K562 (cell line): ENCODE measurements at regions of chr11 and their contacts with region 1.

Region 1: DNA sequence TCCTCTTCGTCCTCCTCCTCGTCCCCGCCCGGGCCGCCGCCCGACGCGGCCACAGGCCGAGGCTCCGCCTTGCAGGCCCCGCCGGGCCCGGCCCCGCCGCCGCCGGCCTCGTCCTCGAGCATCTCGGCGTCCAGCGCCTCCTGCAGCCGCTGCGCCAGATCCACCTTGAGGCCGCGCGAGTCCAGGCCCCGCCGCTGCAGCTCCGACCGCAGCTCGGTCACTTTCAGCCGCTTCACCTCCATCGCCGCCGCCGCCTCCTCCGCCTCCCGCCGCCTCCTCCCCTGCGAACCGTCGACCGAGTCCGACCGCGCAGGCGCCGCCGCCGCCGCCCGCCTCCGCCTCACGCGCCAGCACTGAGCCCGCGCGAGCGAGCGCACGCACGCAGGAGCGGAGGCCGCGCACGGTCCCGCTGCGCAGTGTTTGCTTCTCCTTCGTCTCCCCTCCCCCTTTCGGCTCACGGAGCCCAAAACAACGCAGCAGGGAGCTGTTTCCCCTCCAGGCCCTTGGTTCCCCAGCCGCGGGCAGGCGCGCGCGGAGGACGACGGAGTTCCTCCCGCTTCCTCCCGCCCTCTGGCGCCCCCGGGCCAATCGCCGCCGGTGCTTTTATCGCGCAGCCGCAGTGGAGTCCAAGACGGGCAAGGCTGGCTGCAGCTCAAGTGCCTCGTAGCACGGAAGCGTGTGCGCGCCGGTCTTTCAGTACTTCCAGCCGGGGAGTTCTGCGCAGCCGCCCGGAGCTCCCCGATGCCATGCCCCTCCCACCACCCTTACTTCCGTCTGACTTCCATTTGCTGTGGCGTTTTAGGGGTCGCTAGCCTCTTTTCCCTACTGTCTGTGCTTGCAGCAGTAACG is at the start of gene HNRNPUL2:
- DNase-seq: peak; percentile 94 to 99 (median 96)
- ATAC-seq: peak; percentile 90
- H3K4me3 ChIP-seq: peak within 1 kb of the TSS; percentile 90
- H3K27ac ChIP-seq: peak within 1 kb of the TSS; percentile 99
- H3K4me1 ChIP-seq: peaks cover 13 to 19% of the 10 kb centered on the region in 2 experiments; a peak in 4 of 5 replicates
- H3K27me3 ChIP-seq: no peaks in the 10 kb centered on the region
- CTCF ChIP-seq: peak in 1 of 3 experiments; percentile 40; a peak in 2 of 6 replicates
- EP300 ChIP-seq: peak; percentile 0; the same call in 1 of the 2 replicates
- POLR2A ChIP-seq: peak; percentile 95
- RAD21 ChIP-seq: no peak
- polyA plus RNA-seq, gene HNRNPUL2: 0.89 to 1.4 TPM

Region 2: DNA sequence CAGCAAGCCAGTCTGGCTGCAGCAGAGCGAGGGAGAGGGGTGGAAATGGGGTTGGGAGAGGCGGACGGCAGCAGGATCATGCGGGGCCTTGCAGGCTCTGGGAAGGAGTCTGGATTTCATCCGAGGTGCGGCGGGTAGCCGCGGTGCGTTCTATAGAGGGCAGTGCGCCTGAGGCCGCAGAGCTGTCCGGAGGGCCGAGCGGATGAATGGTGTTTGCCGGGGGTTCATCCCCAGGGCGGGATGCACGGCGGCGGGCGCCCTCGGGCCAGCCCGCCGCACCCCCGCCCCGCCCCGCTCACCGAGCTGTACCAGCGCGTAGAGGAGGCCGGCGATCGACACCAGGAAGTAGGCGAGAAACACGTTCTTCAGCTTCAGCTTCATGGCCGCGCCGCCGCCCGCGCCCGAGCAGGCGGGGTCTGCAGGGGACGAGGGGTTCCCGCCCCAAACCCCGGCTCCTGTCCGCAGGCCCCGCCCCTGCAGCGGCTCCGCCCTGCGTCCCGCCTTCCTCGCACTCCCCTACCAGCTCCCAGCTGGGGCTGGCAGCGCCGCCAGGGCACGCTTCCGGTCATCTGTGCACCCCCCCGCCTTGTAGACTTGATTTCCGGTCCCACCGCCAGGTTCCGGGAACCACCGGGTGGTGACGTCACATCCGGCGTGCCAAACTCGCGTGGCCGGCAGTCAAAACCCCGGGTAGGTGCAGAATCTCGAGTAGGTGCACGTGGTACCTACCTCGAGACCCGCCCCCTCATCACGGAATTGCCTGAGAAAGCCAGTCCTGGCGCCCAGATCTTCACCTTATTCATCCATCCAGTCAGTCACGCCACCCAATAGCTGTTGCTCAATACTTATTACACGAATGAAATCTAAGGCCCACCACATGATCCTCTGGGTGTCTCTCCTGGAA is 105.3 kb before region 1 on chr11 and contains the start of gene B3GAT3:
- CTCF ChIA-PET with region 1: no interaction called
- POLR2A ChIA-PET with region 1: interaction called, 3 read pairs
- in situ Hi-C with region 1: no loop called
- intact Hi-C with region 1: loop called (anchors 1 kb)
- DNase-seq: peak; percentile 97 to 99 (median 98)
- ATAC-seq: peak; percentile 98
- H3K4me3 ChIP-seq: peak within 1 kb of the TSS; percentile 73
- H3K27ac ChIP-seq: peak within 1 kb of the TSS; percentile 84
- H3K4me1 ChIP-seq: peaks cover 12 to 13% of the 10 kb centered on the region in 2 experiments; a peak in 4 of 5 replicates
- H3K27me3 ChIP-seq: no peaks in the 10 kb centered on the region
- CTCF ChIP-seq: peak in 2 of 3 experiments; percentile 8 to 28; a peak in 1 of 6 replicates
- EP300 ChIP-seq: no peak; the same call in 1 of the 2 replicates
- POLR2A ChIP-seq: peak; percentile 79
- RAD21 ChIP-seq: no peak
- polyA plus RNA-seq, gene B3GAT3: 0.30 to 3.3 TPM

Region 3: DNA sequence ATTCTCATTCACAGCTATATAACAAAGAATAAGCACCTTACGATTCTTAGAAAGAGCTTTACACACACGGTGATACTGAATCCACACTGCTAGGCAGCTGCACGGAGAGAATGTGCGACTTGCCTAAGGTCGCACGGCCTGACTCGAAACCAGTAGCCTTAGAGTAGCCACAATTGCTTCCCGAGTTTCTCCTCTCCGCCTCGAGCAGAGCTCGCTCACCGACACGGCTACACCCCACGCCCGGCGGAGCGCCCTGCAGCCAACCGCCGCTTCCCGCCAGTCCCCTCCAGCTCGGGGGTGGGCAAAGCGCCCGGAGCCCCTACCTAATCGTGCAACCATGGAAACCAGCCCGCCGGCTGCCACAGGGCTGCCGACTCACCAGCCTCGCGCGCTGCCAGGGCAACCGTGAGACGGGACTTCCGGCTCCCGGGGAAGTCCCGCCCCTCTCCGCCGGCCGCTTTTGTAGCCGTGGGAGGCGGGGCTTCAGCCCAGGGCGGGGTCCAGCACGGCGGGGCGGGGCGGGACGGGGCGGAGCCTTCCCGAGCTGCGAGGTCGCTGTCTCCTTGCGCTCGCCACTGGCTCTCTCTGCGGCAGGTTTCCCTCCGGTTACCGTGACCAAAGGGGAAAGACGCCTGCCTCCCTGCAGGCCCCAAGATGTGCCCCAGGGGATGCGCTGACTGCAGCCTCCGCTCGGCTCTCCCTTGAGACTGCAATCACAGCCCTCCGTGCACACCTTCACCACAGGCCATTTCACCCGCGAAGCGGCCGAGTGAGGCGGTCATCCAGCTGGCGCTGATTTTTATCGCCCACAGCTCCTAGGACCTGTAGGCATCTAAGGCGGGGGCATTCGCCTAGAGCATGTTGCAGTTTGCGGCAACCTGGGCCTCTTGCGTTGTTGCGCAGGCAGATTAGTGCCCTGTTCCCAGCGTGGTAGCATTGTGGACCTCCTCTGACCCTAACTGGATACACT is 21.0 kb before region 1 on chr11:
- CTCF ChIA-PET with region 1: no interaction called
- POLR2A ChIA-PET with region 1: interaction called, 31 read pairs
- in situ Hi-C with region 1: no loop called
- intact Hi-C with region 1: loop called (anchors 2 kb)
- DNase-seq: peak; percentile 93 to 97 (median 96)
- ATAC-seq: peak; percentile 95
- H3K4me3 ChIP-seq: peak overlapping the region; percentile 72
- H3K27ac ChIP-seq: peak overlapping the region; percentile 82
- H3K4me1 ChIP-seq: peaks cover 29 to 42% of the 10 kb centered on the region in 2 experiments
- H3K27me3 ChIP-seq: no peaks in the 10 kb centered on the region
- CTCF ChIP-seq: no peak
- EP300 ChIP-seq: no peak
- POLR2A ChIP-seq: peak; percentile 79
- RAD21 ChIP-seq: no peak

Region 4: GRCh38 chr11:62753736-62754603 is 26.8 kb after region 1 on chr11 and contains the start of gene ZBTB3:
- CTCF ChIA-PET with region 1: no interaction called
- POLR2A ChIA-PET with region 1: interaction called, 19 read pairs
- in situ Hi-C with region 1: no loop called
- intact Hi-C with region 1: no loop called
- DNase-seq: peak; percentile 95 to 99 (median 96)
- ATAC-seq: peak; percentile 98
- H3K4me3 ChIP-seq: peak within 1 kb of the TSS; percentile 63
- H3K27ac ChIP-seq: peak within 1 kb of the TSS; percentile 86
- H3K4me1 ChIP-seq: peaks cover 14 to 28% of the 10 kb centered on the region in 2 experiments; a peak in 4 of 5 replicates
- H3K27me3 ChIP-seq: no peaks in the 10 kb centered on the region
- CTCF ChIP-seq: peak in 1 of 3 experiments; percentile 1; a peak in 1 of 6 replicates
- EP300 ChIP-seq: no peak
- POLR2A ChIP-seq: peak; percentile 98
- RAD21 ChIP-seq: no peak
- polyA plus RNA-seq, gene ZBTB3: 1.9 to 3.0 TPM

Region 5: DNA sequence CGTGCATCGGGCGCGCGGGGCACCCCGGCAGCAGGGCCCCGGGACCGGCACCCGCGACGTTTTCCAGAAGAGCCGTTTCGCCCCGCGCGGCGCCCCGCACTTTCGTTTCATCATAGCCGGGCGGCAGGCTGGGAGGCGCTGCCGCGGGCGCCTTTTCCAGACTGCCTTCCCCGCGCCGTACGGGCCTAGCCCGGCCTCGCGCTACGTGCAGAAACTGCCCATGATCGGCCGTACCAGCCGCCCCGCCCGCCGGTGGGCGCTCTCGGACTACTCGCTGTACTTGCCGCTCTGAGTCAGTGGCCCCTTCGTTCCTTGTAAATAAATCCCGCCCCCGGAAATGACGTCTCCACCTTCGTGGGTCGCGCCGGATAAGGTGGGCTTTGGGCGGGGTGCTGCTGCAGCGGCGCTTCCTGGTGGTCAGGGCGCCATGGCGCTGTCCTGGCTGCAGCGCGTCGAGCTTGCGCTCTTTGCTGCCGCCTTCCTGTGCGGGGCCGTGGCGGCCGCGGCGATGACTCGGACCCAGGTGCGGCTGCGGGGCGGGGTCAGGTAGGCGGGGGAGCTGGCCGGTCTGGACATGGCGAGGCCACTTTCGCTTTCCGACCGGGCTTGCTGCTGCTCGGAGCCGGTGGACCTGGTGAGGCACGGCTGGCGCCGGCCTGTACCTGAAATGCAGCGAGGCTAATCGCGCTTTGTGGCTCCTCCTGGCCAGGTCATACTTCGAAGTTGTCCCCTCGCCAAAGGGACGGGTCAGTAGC is 60.0 kb after region 1 on chr11 and contains the start of gene TMEM179B:
- CTCF ChIA-PET with region 1: interaction called, 25 read pairs
- POLR2A ChIA-PET with region 1: interaction called, 16 read pairs
- in situ Hi-C with region 1: no loop called
- intact Hi-C with region 1: loop called (anchors 2 kb)
- DNase-seq: peak; percentile 83 to 99 (median 90)
- ATAC-seq: peak; percentile 80
- H3K4me3 ChIP-seq: peak within 1 kb of the TSS; percentile 82
- H3K27ac ChIP-seq: peak within 1 kb of the TSS; percentile 92
- H3K4me1 ChIP-seq: peaks cover 27 to 29% of the 10 kb centered on the region in 2 experiments
- H3K27me3 ChIP-seq: no peaks in the 10 kb centered on the region
- CTCF ChIP-seq: peak; percentile 67 to 90 (median 81)
- EP300 ChIP-seq: no peak
- POLR2A ChIP-seq: peak; percentile 96
- RAD21 ChIP-seq: peak; percentile 28 to 52; a peak in 3 of 4 replicates
- polyA plus RNA-seq, gene TMEM179B: 88.6 to 105 TPM